H1 (cell line): ENCODE measurements at regions of chr6 and their contacts with region 1.

Region 1: DNA sequence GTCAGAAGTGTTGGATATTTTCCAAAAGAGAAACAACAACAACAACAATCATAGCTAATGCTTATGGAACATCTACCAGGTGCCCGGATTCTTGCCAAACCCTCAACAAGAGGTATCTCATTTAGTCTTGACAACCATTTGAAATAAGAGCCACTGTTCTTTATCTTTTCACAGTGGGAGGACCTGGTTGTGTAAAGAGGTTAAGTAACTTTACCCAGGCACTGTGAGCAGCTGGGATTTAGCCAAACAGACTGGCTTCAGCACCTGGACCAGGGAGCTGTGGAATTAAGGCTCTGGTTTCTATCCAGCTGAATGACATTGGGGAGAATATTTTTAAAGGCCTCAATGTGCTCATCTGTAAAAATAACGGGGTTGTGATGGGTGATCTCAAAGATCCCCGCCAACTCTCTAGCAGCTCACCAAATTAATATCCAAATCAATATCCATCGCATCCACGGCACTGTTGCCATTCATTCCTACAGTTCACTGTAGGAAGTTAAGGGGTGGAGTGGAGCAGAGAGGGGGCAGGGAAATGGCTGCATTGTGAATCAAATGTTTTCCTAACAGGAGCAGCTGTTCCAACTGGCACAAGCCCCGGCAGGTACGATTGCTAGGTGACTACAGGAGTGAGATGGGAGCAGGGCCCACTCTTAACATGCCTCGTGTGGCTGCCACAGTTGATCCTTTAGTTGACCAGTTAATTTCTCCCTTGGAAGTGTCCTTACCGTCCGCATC is 61.8 kb downstream of the GCNT2 start:
- DNase-seq: no peak
- H3K4me3 ChIP-seq: peak overlapping the region in 3 of 4 experiments; percentile 7 to 49 (median 30); a peak in 5 of 8 replicates
- H3K27ac ChIP-seq: peak overlapping the region; percentile 79
- H3K4me1 ChIP-seq: peaks cover 24 to 57% (median 40%) of the 10 kb centered on the region in 4 experiments
- H3K27me3 ChIP-seq: no peaks in the 10 kb centered on the region
- CTCF ChIP-seq: no peak
- EP300 ChIP-seq: peak in 1 of 2 experiments; percentile 73; a peak in 1 of 3 replicates
- POLR2A ChIP-seq: peak in 1 of 2 experiments; percentile 58; a peak in 1 of 3 replicates
- RAD21 ChIP-seq: peak in 1 of 2 experiments; percentile 8; a peak in 1 of 4 replicates

Region 2: GRCh38 chr6:10521104-10521808 is 61.7 kb before region 1 on chr6 and contains the start of gene GCNT2:
- CTCF ChIA-PET with region 1: interaction called, 4 read pairs
- POLR2A ChIA-PET with region 1: interaction called, 17 read pairs
- DNase-seq: peak; percentile 59 to 78
- H3K4me3 ChIP-seq: peak within 1 kb of the TSS in 3 of 4 experiments; percentile 26 to 41 (median 35); a peak in 5 of 8 replicates
- H3K27ac ChIP-seq: peak within 1 kb of the TSS; percentile 1
- H3K4me1 ChIP-seq: peaks cover 10 to 30% (median 20%) of the 10 kb centered on the region in 4 experiments
- H3K27me3 ChIP-seq: no peaks in the 10 kb centered on the region
- CTCF ChIP-seq: no peak
- EP300 ChIP-seq: peak in 1 of 2 experiments; percentile 74; a peak in 1 of 3 replicates
- POLR2A ChIP-seq: peak; percentile 33 to 37; a peak in 2 of 3 replicates
- RAD21 ChIP-seq: peak in 1 of 2 experiments; percentile 11; a peak in 1 of 4 replicates
- total RNA-seq, gene GCNT2: 52.5 and 54.3 TPM in 2 replicates

Region 3: GRCh38 chr6:10567256-10568026 is 15.5 kb before region 1 on chr6:
- CTCF ChIA-PET with region 1: interaction called, 10 read pairs
- POLR2A ChIA-PET with region 1: interaction called, 154 read pairs
- DNase-seq: no peak
- H3K4me3 ChIP-seq: no peak overlapping the region
- H3K27ac ChIP-seq: no peak overlapping the region
- H3K4me1 ChIP-seq: peaks cover 0 to 10% (median 1%) of the 10 kb centered on the region in 4 experiments; a peak in 4 of 7 replicates
- H3K27me3 ChIP-seq: no peaks in the 10 kb centered on the region
- CTCF ChIP-seq: no peak
- EP300 ChIP-seq: no peak
- POLR2A ChIP-seq: no peak
- RAD21 ChIP-seq: no peak

Region 4: DNA sequence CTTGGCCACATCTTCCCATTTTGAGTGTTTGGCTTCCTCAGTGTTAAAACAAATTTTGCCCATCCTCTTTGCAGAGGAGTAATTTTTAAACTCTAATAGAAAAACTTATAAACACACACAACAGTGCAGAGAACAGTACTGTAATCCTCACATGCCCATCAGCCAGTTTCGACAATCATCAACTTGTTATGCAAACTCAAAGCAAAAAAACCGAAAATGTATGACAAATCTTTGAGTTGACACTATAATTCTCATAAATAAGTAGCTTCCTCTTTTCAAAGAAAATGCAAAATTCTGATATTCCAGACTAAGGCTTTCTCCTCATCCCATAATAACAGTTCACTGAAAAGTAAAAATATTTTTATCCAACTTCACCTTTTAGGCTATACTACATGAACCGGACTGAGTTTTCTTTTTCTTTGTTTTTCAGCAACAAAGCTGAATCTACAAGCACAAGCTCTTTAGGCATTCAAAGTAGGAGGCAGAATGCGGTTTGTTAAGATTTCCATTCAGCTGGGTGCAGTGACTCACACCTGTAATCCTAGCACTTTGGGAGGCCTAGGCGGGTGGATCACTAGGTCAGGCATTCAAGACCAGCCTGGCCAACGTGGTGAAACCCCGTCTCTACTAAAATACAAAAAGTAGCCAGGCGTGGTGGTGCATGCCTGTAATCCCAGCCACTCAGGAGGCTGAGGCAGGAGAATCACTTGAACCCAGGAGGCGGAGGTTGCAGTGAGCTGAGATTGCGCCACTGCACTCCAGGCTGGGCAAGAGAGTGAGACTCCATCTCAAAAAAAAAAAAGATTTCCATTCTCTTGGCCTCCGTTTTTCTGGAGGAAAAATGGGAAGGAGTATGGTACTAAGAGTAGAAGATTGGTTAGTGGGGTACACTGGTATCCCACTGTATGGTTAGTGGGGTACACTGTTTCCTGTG is 13.1 kb after region 1 on chr6:
- CTCF ChIA-PET with region 1: interaction called, 4 read pairs
- POLR2A ChIA-PET with region 1: interaction called, 25 read pairs
- DNase-seq: no peak
- H3K4me3 ChIP-seq: peak overlapping the region in 1 of 4 experiments; percentile 9; a peak in 1 of 8 replicates
- H3K27ac ChIP-seq: peak overlapping the region; percentile 78
- H3K4me1 ChIP-seq: peaks cover 6 to 36% (median 20%) of the 10 kb centered on the region in 4 experiments
- H3K27me3 ChIP-seq: no peaks in the 10 kb centered on the region
- CTCF ChIP-seq: no peak
- EP300 ChIP-seq: no peak
- POLR2A ChIP-seq: no peak
- RAD21 ChIP-seq: no peak

Region 5: DNA sequence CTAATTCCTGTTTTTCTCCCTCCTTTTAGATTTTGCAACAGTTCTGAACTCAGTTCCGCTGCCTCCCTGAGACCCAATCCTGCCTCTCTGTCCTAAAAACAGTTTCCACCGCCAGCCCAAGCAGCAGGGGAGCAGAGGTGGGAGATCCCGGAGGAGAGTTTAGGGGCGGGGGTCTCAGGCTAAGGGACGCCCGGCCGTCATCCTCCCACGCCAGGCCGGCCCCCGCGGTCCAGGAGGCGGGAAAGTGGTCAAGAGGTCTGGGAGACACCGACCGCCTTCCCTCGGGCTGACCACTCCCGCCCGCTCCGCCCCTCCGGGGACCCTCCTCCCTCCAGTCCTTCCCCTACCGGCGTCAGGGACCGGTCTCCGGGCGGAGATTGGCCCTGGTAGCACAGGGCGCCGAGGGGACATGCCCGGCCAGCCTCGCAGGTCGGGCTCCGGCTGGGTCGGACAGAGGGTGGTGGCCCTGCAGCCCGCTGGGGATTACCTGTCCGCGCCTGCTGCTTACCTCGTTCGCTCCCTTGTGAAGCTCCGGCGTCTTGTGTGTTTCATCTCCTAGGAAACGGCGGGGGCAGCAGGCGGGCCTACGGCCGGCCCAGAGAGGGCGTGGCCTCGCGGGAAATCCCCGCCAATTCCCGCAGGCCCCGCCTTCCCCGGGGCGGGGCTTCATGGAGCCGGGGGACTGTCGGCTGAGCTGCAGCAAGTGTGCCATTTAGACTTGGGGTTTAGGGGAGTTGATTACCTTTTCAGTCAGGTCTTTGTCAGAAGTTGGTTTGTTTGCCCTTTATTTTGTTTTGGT is 255.3 kb after region 1 on chr6 and contains the start of gene MAK:
- CTCF ChIA-PET with region 1: no interaction called
- POLR2A ChIA-PET with region 1: no interaction called
- DNase-seq: peak; percentile 67 to 93
- H3K4me3 ChIP-seq: peak within 1 kb of the TSS; percentile 55 to 81 (median 77)
- H3K27ac ChIP-seq: peak within 1 kb of the TSS; percentile 66
- H3K4me1 ChIP-seq: no peaks in the 10 kb centered on the region; a peak in 2 of 7 replicates
- H3K27me3 ChIP-seq: peaks cover 0 to 8% (median 3%) of the 10 kb centered on the region in 4 experiments; a peak in 2 of 7 replicates
- CTCF ChIP-seq: no peak
- EP300 ChIP-seq: no peak
- POLR2A ChIP-seq: peak in 1 of 2 experiments; percentile 33; a peak in 2 of 3 replicates
- RAD21 ChIP-seq: no peak
- total RNA-seq, gene MAK: 0.33 and 0.37 TPM in 2 replicates